ENCODE measurements at regions of chr12 and their contacts with region 1.

Region 1: DNA sequence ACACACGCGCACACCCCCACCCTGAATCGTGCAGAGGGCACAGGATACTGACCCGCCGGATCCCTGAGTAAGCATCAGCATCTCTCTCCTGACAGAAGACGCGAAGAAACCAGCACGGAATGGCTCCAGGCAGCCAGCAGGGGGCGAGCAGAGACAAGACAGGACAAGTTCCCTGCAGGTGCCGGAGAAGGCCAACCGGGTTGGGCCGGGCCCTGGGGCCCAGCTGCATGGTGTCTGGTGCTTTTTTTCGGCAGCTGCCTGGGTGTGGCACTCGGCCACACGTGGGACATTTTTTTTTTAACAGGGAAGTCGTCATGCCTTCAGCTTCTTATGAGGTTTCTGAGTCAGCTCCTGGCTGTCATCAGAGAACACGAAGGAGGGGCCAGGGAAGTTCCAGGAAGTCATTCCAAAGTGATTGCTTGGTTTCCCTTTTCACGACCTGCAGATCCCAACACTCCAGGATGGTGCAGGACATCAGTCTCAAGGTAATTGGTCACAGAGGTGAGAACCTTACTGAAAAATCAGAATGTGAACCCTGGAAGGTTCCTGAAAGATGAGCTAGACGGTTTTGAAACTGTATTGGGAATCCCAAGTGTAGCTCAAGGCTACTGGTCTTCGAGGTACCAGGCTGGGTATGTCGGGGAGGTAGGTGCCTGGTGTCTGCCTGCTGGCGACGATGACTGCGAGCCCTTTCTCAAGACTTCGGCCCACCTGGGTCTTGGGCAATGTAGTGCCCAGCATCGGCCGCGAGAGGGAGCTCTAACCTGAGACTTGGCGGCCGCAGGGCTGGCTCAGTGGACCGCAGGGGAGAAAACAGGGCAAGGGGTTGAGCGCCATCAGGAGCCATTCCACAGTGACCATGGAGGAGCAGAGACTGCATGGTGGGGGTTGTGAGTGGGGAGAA is 190.8 kb upstream of the PRMT8 start:
- DNase-seq: peak; percentile 50
- H3K4me3 ChIP-seq: peak overlapping the region in 3 of 4 donors; percentile 16 to 41 (median 22)
- H3K27ac ChIP-seq: peak overlapping the region; percentile 70 to 85 (median 78)
- H3K4me1 ChIP-seq: peaks cover 13 to 46% (median 28%) of the 10 kb centered on the region in 3 donors
- H3K27me3 ChIP-seq: peaks cover 0 to 75% (median 0%) of the 10 kb centered on the region in 4 donors
- CTCF ChIP-seq: peak; percentile 85 to 98 (median 96)
- POLR2A ChIP-seq: no peak

Region 2: GRCh38 chr12:3004655-3005565 is 295.3 kb before region 1 on chr12:
- intact Hi-C with region 1: no loop called
- DNase-seq: no peak
- H3K4me3 ChIP-seq: no peak overlapping the region
- H3K27ac ChIP-seq: no peak overlapping the region
- H3K4me1 ChIP-seq: peaks cover 0 to 16% (median 0%) of the 10 kb centered on the region in 3 donors
- H3K27me3 ChIP-seq: no peaks in the 10 kb centered on the region
- CTCF ChIP-seq: peak in 1 of 6 experiments; percentile 38
- POLR2A ChIP-seq: no peak

Region 3: DNA sequence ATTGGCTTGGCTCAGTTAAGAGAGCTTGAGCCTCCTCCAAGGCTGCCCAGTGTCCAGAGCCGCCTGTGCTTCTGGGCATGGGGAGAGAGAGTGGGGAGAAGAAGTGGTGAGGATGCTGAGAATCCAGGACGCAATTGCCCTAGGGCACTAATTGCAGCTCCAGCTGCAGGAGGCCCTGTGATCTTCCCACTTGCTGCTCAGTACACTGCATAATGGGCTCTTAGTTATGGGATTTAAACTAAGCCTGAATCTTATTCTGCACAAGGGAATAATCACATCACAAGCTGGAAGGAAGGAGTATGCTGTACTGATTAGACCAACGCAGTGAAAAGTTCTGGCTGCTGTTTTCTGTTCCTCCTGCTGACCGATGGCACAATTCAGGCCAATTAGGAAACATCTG is 89.8 kb after region 1 on chr12:
- intact Hi-C with region 1: no loop called
- DNase-seq: no peak
- H3K4me3 ChIP-seq: no peak overlapping the region
- H3K27ac ChIP-seq: no peak overlapping the region
- H3K4me1 ChIP-seq: no peaks in the 10 kb centered on the region
- H3K27me3 ChIP-seq: peaks cover 0 to 37% (median 0%) of the 10 kb centered on the region in 4 donors
- CTCF ChIP-seq: no peak
- POLR2A ChIP-seq: no peak

Region 4: DNA sequence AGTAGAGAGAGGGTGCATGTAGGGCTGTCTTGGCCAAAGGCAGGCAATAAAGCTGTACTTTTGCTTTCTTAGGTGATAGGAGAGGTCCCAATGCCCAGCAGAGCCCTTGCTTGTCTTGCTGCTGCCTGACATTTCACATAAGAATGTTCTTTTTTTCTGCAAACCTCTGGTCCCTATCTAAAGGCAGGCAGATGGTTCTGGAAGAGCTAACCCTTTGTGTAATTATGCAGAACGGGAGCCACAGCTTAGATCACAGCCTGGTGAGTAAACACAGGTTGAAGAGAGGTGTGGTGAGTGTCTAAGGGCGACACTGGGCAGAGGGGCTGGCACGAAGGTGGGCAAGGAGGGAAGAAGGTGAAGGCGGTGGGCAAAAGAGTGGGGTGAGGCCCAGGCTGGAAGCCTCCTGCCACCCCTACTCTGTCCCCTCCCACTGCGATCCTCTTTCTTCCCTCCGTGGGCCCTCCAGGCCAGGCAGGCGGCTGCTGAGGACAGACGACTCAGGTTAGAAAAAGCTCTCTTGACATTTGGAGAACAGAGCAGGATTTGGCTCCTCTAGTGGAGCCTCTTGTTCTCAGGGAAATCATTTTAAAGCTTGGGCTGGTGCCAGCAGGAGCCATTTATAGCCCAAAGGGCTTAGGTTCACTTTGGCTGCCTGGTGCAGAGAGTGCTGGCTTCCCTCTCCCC is 233.7 kb after region 1 on chr12:
- intact Hi-C with region 1: loop called (anchors 10 kb)
- DNase-seq: no peak
- H3K4me3 ChIP-seq: no peak overlapping the region
- H3K27ac ChIP-seq: no peak overlapping the region
- H3K4me1 ChIP-seq: no peaks in the 10 kb centered on the region
- H3K27me3 ChIP-seq: peaks cover 0 to 37% (median 0%) of the 10 kb centered on the region in 4 donors
- CTCF ChIP-seq: no peak
- POLR2A ChIP-seq: no peak

Region 5: DNA sequence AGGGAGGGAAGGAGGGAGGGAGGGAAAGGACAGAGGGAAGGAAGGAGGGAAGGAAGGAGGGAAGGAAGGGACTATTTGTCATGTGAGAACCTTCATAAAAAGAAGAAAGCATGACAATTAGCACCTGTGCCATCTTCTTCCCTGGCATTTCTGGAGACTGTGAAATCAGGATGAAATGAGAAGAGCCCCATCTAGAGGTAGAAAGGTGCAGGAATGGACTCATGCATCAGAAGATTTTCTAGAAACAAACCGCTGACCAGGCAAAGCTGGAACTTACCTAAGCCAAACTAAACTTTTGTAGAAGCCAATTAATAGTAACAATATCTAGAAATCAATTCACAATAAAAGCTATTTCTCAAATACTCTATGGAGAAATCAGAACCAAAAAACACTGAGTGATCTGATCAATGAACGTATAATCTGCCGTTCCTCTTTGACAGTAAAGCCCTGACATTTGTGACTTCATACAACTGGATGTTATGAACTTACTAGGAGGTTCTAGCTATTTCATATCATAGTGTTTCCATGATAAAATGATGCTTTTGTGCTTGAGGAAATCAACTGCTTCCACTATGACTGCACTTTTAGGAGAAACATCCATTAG is 477.1 kb after region 1 on chr12:
- intact Hi-C with region 1: loop called (anchors 10 kb)
- DNase-seq: no peak
- H3K4me3 ChIP-seq: no peak overlapping the region
- H3K27ac ChIP-seq: no peak overlapping the region
- H3K4me1 ChIP-seq: no peaks in the 10 kb centered on the region
- H3K27me3 ChIP-seq: peaks cover 0 to 32% (median 0%) of the 10 kb centered on the region in 4 donors
- CTCF ChIP-seq: peak; percentile 31 to 71 (median 57)
- POLR2A ChIP-seq: no peak

Region 6: DNA sequence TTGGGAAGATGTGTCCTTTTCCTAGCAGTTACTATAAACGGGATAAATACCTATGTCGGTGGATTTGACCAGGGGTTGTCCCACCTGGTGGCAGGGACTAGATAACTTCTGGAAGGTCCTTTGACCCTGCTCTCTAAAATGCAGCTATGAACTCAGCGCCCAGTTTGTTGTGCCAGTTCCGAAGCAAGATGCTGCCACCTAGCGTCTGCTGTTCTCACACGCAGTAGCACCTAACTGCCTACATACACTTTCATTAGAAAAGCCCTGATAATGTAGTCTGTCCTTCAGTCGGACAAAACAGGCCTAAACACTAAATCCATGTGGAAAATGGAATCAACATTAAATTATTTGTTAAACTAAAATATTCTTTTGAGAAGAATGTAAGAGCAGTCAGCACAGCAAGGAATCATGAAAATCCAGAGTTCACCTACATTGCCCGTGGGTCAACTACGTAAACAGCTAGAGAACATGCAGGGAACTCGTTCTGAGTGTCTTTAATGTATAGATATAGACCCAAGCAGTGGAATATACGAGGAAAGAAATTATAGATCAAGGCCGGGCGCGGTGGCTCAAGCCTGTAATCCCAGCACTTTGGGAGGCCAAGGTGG is 503.8 kb after region 1 on chr12:
- intact Hi-C with region 1: loop called (anchors 5 kb)
- DNase-seq: no peak
- H3K4me3 ChIP-seq: no peak overlapping the region
- H3K27ac ChIP-seq: no peak overlapping the region
- H3K4me1 ChIP-seq: no peaks in the 10 kb centered on the region
- H3K27me3 ChIP-seq: no peaks in the 10 kb centered on the region
- CTCF ChIP-seq: peak; percentile 45 to 82 (median 72)
- POLR2A ChIP-seq: no peak